HepG2 (cell line): ENCODE measurements at regions of chr7 and their contacts with region 1.

Region 1: DNA sequence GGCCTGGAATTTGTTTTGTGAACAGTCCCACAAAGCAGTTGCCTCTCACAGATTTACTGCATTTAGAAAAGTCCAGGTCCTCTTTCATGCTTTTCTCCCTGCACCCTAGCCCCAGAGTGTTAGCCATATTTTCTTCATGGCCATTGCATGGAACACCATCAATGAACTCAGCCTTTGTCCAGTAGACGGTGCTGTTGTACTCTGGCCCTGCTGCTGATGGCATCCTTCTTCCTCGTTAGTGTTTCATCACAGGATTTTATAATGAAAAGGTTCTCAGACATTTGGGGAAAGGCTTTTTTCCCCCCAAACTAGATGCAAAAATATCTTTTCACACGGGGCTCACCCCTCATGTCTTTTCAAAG is 93.0 kb upstream of the SLC25A13 start:
- DNase-seq: peak; percentile 71
- ATAC-seq: peak; percentile 80
- H3K4me3 ChIP-seq: peak overlapping the region in 2 of 3 experiments; percentile 36 to 44; a peak in 3 of 6 replicates
- H3K27ac ChIP-seq: peak overlapping the region; percentile 96
- H3K4me1 ChIP-seq: peaks cover 43% of the 10 kb centered on the region
- H3K27me3 ChIP-seq: no peaks in the 10 kb centered on the region
- CTCF ChIP-seq: peak; percentile 92
- EP300 ChIP-seq: 0 out of 4 replicates have a peak, but pooled peaks of 1 of the 2 experiments have one; percentile 27
- POLR2A ChIP-seq: no peak
- RAD21 ChIP-seq: peak; percentile 82

Region 2: GRCh38 chr7:96075510-96076349 is 339.2 kb before region 1 on chr7:
- CTCF ChIA-PET with region 1: no interaction called
- POLR2A ChIA-PET with region 1: no interaction called
- in situ Hi-C with region 1: no loop called
- intact Hi-C with region 1: loop called (anchors 5 kb)
- DNase-seq: peak; percentile 55
- ATAC-seq: peak; percentile 99
- H3K4me3 ChIP-seq: peak overlapping the region; percentile 53 to 56 (median 56)
- H3K27ac ChIP-seq: no peak overlapping the region
- H3K4me1 ChIP-seq: peaks cover 7% of the 10 kb centered on the region
- H3K27me3 ChIP-seq: peaks cover 3 to 14% of the 10 kb centered on the region in 2 experiments; a peak in 3 of 5 replicates
- CTCF ChIP-seq: peak; percentile 91
- EP300 ChIP-seq: no peak
- POLR2A ChIP-seq: no peak
- RAD21 ChIP-seq: peak; percentile 90

Region 3: GRCh38 chr7:96321658-96322372 is 93.1 kb before region 1 on chr7 and contains the start of gene SLC25A13:
- CTCF ChIA-PET with region 1: no interaction called
- POLR2A ChIA-PET with region 1: interaction called, 3 read pairs
- in situ Hi-C with region 1: no loop called
- intact Hi-C with region 1: loop called (anchors 2 kb)
- DNase-seq: peak; percentile 86
- ATAC-seq: peak; percentile 96
- H3K4me3 ChIP-seq: peak within 1 kb of the TSS; percentile 76 to 93 (median 91)
- H3K27ac ChIP-seq: peak within 1 kb of the TSS; percentile 98
- H3K4me1 ChIP-seq: peaks cover 51% of the 10 kb centered on the region
- H3K27me3 ChIP-seq: no peaks in the 10 kb centered on the region
- CTCF ChIP-seq: peak; percentile 51
- EP300 ChIP-seq: peak; percentile 55 to 58; a peak in 3 of 4 replicates
- POLR2A ChIP-seq: peak; percentile 31 to 56; a peak in 2 of 4 replicates
- RAD21 ChIP-seq: peak; percentile 9
- total RNA-seq, gene SLC25A13: 84.9 and 112 TPM in 2 replicates

Region 4: DNA sequence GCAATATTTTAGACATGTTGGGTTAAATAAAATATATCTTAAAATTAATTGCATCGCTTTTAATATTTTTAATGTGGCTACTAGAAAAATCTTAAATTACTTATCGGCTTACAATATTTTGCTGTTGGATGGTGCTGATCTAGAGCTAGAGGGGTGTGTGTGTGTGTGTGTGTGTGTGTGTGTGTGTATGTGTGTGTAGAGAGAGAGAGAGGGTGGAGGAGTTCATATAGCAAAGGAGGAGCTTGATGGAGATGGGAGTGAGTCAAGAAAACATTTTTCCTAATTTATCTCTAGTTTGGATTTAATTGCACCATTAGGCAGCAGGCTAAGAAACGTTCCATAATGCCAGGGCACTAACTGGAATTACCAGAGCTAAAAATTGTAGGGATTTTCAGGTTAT is 82.6 kb before region 1 on chr7:
- CTCF ChIA-PET with region 1: no interaction called
- POLR2A ChIA-PET with region 1: no interaction called
- in situ Hi-C with region 1: no loop called
- intact Hi-C with region 1: no loop called
- DNase-seq: no peak
- ATAC-seq: no peak
- H3K4me3 ChIP-seq: no peak overlapping the region
- H3K27ac ChIP-seq: no peak overlapping the region
- H3K4me1 ChIP-seq: peaks cover 28% of the 10 kb centered on the region
- H3K27me3 ChIP-seq: no peaks in the 10 kb centered on the region
- CTCF ChIP-seq: no peak
- EP300 ChIP-seq: no peak
- POLR2A ChIP-seq: no peak
- RAD21 ChIP-seq: no peak

Region 5: GRCh38 chr7:96499532-96499931 is 84.6 kb after region 1 on chr7:
- CTCF ChIA-PET with region 1: no interaction called
- POLR2A ChIA-PET with region 1: no interaction called
- in situ Hi-C with region 1: no loop called
- intact Hi-C with region 1: no loop called
- DNase-seq: no peak
- ATAC-seq: no peak
- H3K4me3 ChIP-seq: no peak overlapping the region
- H3K27ac ChIP-seq: no peak overlapping the region
- H3K4me1 ChIP-seq: peaks cover 16% of the 10 kb centered on the region
- H3K27me3 ChIP-seq: no peaks in the 10 kb centered on the region
- CTCF ChIP-seq: no peak
- EP300 ChIP-seq: no peak
- POLR2A ChIP-seq: no peak
- RAD21 ChIP-seq: no peak

Region 6: DNA sequence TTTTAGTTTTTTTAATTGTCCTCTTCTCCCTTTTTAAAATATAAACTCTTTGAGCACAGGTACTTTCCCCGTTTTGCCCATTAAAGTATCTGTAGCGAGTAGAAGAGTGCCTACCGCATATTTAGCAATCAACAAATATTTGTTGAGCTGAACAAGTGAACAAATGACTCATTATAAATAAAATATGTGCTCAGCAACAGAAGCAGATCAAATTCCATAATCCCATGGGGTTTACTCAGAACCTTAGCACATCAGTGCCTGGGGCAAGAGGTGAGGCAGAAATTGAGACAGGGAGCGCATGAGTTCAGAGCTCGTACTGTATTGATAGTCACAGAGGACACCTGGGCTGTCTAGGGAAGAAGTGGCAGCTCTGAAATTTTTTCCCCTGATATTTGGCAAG is 133.8 kb after region 1 on chr7:
- CTCF ChIA-PET with region 1: no interaction called
- POLR2A ChIA-PET with region 1: no interaction called
- in situ Hi-C with region 1: no loop called
- intact Hi-C with region 1: loop called (anchors 5 kb)
- DNase-seq: peak; percentile 76
- ATAC-seq: peak; percentile 99
- H3K4me3 ChIP-seq: no peak overlapping the region
- H3K27ac ChIP-seq: no peak overlapping the region
- H3K4me1 ChIP-seq: peaks cover 26% of the 10 kb centered on the region
- H3K27me3 ChIP-seq: no peaks in the 10 kb centered on the region
- CTCF ChIP-seq: no peak
- EP300 ChIP-seq: peak in 1 of 2 experiments; percentile 54; a peak in 1 of 4 replicates
- POLR2A ChIP-seq: no peak
- RAD21 ChIP-seq: no peak

Region 7: DNA sequence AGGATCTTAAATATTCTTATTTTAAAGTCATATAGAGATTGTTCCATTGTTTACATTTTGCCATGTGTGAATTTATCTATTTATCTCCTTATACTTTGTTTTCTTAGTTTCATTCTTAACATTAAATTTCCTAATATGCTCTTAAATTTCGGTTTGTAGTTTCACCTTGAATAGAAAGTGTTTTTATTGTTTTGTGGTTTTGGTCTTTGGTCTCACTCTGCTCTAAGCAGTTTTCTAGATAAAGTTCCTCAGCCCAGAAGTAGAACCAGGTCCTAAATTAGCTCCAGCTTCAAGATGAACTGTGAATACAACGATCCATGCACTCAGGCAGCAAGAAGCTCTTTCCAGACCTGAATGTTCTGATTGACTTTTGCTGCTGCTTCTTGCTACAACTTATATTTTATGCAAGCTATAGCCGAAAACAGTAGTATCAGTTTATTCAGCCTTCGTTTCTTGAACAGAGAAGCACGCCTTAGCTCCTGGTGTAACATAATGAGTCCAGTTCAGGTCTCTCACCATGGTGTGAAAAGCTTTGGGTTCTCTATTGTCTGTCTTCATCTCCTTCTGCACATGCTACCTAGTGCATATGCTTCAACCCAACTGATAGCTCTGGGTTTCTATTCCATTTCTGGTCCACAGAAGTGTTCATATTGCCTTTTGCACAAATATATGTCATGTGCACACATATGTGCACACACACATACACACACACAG is 199.4 kb after region 1 on chr7:
- CTCF ChIA-PET with region 1: no interaction called
- POLR2A ChIA-PET with region 1: no interaction called
- in situ Hi-C with region 1: no loop called
- intact Hi-C with region 1: no loop called
- DNase-seq: no peak
- ATAC-seq: no peak
- H3K4me3 ChIP-seq: no peak overlapping the region
- H3K27ac ChIP-seq: no peak overlapping the region
- H3K4me1 ChIP-seq: no peaks in the 10 kb centered on the region
- H3K27me3 ChIP-seq: no peaks in the 10 kb centered on the region
- CTCF ChIP-seq: no peak
- EP300 ChIP-seq: no peak
- POLR2A ChIP-seq: no peak
- RAD21 ChIP-seq: no peak

Region 8: GRCh38 chr7:96694082-96694481 is 279.2 kb after region 1 on chr7:
- CTCF ChIA-PET with region 1: no interaction called
- POLR2A ChIA-PET with region 1: no interaction called
- in situ Hi-C with region 1: no loop called
- intact Hi-C with region 1: no loop called
- DNase-seq: no peak
- ATAC-seq: no peak
- H3K4me3 ChIP-seq: no peak overlapping the region
- H3K27ac ChIP-seq: no peak overlapping the region
- H3K4me1 ChIP-seq: peaks cover 17% of the 10 kb centered on the region
- H3K27me3 ChIP-seq: no peaks in the 10 kb centered on the region
- CTCF ChIP-seq: no peak
- EP300 ChIP-seq: no peak
- POLR2A ChIP-seq: no peak
- RAD21 ChIP-seq: no peak

Region 9: GRCh38 chr7:96709381-96710228 is 294.7 kb after region 1 on chr7 and contains the start of gene SEM1:
- CTCF ChIA-PET with region 1: no interaction called
- POLR2A ChIA-PET with region 1: no interaction called
- in situ Hi-C with region 1: no loop called
- intact Hi-C with region 1: loop called (anchors 2 kb)
- DNase-seq: peak; percentile 78
- ATAC-seq: peak; percentile 99
- H3K4me3 ChIP-seq: peak within 1 kb of the TSS; percentile 85 to 91 (median 90)
- H3K27ac ChIP-seq: peak within 1 kb of the TSS; percentile 88
- H3K4me1 ChIP-seq: peaks cover 34% of the 10 kb centered on the region
- H3K27me3 ChIP-seq: no peaks in the 10 kb centered on the region; a peak in 1 of 5 replicates
- CTCF ChIP-seq: no peak
- EP300 ChIP-seq: no peak
- POLR2A ChIP-seq: peak; percentile 82 to 85
- RAD21 ChIP-seq: peak; percentile 27; the same call in 1 of the 2 replicates
- total RNA-seq, gene SEM1: 174 and 239 TPM in 2 replicates

Region 10: DNA sequence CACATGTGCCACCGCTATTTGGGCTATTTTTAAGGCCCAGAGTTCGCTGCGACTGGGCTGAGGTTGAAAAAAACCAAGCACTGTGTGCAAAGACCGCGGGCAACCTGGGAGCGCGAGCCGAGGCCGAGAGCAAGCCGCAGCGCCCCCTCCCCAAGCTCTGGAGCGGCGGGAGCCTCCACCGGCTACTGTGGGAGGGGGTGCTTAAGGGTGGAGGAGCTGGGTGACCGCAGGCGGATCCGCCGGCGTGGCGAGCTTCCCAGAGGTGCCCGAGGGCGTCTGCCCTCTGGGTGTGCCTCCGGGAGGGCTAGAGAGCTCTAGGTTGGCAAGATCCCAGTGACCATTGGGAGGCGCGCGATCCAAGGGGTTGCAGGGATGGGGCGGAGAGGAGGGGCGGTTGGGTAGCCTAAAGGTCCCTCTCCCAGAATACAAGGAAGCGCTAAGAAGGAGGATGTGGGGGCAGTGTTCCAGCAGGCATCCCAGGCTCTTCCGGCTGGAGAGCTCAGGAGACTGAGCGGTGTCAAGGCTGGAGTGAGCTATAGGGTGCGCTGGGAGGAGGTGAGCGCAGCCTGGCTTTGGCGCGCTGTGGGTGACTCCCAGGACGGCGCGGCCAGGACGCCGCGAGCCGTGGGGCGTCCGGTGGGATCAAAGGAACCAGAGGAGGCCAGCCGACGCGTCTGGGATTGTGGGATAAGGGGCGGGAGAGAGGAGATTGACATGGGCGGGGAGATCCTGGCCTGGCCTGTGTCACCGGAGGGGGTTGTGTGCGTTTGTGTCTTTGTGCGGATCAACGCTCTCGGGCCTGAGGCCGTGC is 601.7 kb after region 1 on chr7:
- CTCF ChIA-PET with region 1: no interaction called
- POLR2A ChIA-PET with region 1: interaction called, 10 read pairs
- in situ Hi-C with region 1: loop called (anchors 10 kb)
- intact Hi-C with region 1: loop called (anchors 2 kb)
- DNase-seq: peak; percentile 76
- ATAC-seq: peak; percentile 90
- H3K4me3 ChIP-seq: peak overlapping the region; percentile 77 to 83 (median 79)
- H3K27ac ChIP-seq: peak overlapping the region; percentile 79
- H3K4me1 ChIP-seq: peaks cover 26% of the 10 kb centered on the region
- H3K27me3 ChIP-seq: no peaks in the 10 kb centered on the region
- CTCF ChIP-seq: peak; percentile 75
- EP300 ChIP-seq: no peak
- POLR2A ChIP-seq: peak; percentile 56 to 82; a peak in 3 of 4 replicates
- RAD21 ChIP-seq: peak; percentile 46; the same call in 1 of the 2 replicates